Activated B cell treated with CpG ODN at 0.5 μM for 24 hours (primary cell): ENCODE measurements at regions of chr20 and their contacts with region 1.

Region 1: GRCh38 chr20:1509237-1509636 is 18.0 kb upstream of the SIRPB2 start:
- DNase-seq: no peak
- ATAC-seq: peak; percentile 57
- H3K4me3 Mint-ChIP-seq: no peak overlapping the region
- H3K27ac Mint-ChIP-seq: no peak overlapping the region
- H3K4me1 Mint-ChIP-seq: no peaks in the 10 kb centered on the region
- H3K27me3 Mint-ChIP-seq: peaks cover 17% of the 10 kb centered on the region
- CTCF ChIP-seq: no peak

Region 2: DNA sequence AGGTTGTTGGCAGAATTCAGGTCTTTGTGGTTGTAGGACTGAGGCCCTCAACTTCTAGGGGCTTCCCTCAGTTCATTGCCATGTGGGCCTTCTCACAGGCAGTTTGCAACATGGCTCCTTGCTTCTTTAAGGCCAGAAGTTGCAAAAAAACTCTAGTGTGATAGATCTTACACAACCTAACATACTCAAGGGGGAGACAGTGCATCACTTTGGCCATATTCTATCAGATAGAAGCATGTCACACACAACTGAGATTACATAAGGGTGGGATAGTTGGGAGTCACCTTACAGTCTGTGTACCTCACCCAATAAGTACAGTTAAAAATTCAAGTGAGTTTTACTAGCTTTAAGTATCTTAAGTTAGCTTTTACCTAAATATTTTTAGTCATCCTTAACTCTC is 46.7 kb after region 1 on chr20:
- CTCF ChIA-PET with region 1: no interaction called
- POLR2A ChIA-PET with region 1: no interaction called
- intact Hi-C with region 1: no loop called
- DNase-seq: no peak
- ATAC-seq: no peak
- H3K4me3 Mint-ChIP-seq: no peak overlapping the region
- H3K27ac Mint-ChIP-seq: no peak overlapping the region
- H3K4me1 Mint-ChIP-seq: no peaks in the 10 kb centered on the region
- H3K27me3 Mint-ChIP-seq: no peaks in the 10 kb centered on the region
- CTCF ChIP-seq: no peak

Region 3: DNA sequence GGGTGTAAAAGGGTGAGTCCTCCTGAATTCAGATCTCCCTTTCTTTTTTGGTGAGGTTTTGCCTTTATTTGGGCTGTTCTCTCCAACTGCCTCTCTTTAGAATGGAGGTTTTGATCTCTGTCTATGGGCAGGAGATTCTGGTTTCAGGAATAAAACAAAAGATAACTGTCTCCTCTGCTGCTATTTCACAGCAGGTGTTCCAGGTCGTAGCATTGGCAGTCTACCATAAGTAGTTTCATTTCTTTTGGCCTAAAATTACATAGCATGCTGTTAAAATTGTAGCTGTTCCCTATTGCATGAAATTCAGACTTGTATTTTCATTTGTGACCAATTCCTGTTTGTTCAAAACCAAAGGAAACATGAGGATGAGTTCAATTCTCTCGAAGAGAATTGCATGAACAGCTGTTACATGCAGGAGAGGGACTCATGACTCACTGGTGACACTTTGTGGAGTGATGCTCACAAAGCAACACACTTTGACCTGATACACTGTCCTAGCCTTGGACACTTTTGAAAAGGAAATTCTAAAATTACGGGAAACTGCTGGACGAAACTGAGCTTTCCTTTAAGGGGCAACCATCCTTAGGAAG is 225.1 kb after region 1 on chr20:
- CTCF ChIA-PET with region 1: interaction called, 3 read pairs
- POLR2A ChIA-PET with region 1: no interaction called
- intact Hi-C with region 1: loop called (anchors 1 kb)
- DNase-seq: no peak
- ATAC-seq: no peak
- H3K4me3 Mint-ChIP-seq: no peak overlapping the region
- H3K27ac Mint-ChIP-seq: no peak overlapping the region
- H3K4me1 Mint-ChIP-seq: peaks cover 16% of the 10 kb centered on the region
- H3K27me3 Mint-ChIP-seq: peaks cover 5% of the 10 kb centered on the region
- CTCF ChIP-seq: no peak